Naive thymus-derived CD4-positive, alpha-beta T cell (primary cell): ENCODE measurements at regions of chr13 and their contacts with region 1.

Region 1: GRCh38 chr13:24727731-24728601 is 36.0 kb upstream of the RNF17 start:
- DNase-seq: peak in 8 of 9 donors; percentile 55 to 82 (median 73)
- ATAC-seq: peak; percentile 99
- H3K4me3 ChIP-seq: no peak overlapping the region
- H3K4me3 Mint-ChIP-seq: no peak overlapping the region
- H3K27ac ChIP-seq: no peak overlapping the region
- H3K27ac Mint-ChIP-seq: peak overlapping the region in 1 of 9 donors; percentile 6
- H3K4me1 ChIP-seq: peaks cover 0 to 4% of the 10 kb centered on the region in 2 donors
- H3K4me1 Mint-ChIP-seq: peaks cover 0 to 14% (median 0%) of the 10 kb centered on the region in 7 donors
- H3K27me3 ChIP-seq: no peaks in the 10 kb centered on the region
- H3K27me3 Mint-ChIP-seq: peaks cover 0 to 42% (median 12%) of the 10 kb centered on the region in 5 donors

Region 2: DNA sequence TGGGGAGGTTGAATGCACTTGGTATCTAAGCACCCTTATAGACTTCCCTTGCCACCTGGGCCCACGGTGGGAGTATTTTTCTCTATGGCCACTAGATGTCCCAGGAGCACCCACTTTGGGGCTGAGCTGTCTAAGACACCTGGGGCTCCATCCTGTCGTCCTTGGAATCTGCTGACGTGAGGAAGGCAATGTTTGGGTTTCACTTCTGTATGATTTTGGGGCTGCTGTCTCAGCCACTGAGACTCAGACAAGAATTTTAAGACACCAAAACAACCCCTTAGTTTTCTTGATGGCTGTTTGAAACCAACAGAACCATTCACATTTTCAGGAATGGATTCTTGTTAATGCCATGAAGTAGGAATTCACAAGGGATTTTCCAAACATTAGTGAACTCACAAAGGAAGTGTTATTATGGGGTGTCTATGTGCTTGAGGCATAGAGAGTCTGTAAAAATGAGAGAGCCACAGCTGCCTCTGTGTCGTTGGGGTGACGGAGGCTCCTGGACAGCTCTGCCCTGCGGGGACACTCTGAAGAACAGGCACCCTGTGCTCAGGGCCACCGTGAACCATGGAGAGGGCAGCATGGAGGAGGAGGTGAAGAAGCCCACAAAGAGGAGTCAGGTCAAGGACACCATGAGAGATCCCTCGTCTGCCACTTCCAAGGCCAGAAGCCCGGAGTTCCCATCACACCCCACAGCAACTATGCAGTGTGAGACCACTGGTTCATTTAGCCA is 674.3 kb before region 1 on chr13:
- CTCF ChIA-PET with region 1: no interaction called
- POLR2A ChIA-PET with region 1: no interaction called
- intact Hi-C with region 1: loop called in 1 of 2 experiments (anchors 10 kb)
- DNase-seq: peak; percentile 24 to 70 (median 61)
- ATAC-seq: peak; percentile 91
- H3K4me3 ChIP-seq: no peak overlapping the region
- H3K4me3 Mint-ChIP-seq: no peak overlapping the region
- H3K27ac ChIP-seq: no peak overlapping the region
- H3K27ac Mint-ChIP-seq: peak overlapping the region in 5 of 9 donors; percentile 21 to 68 (median 24)
- H3K4me1 ChIP-seq: no peaks in the 10 kb centered on the region
- H3K4me1 Mint-ChIP-seq: peaks cover 0 to 12% (median 9%) of the 10 kb centered on the region in 7 donors
- H3K27me3 ChIP-seq: no peaks in the 10 kb centered on the region
- H3K27me3 Mint-ChIP-seq: peaks cover 3 to 22% (median 7%) of the 10 kb centered on the region in 5 donors

Region 3: GRCh38 chr13:24605923-24606372 is 122.0 kb before region 1 on chr13:
- CTCF ChIA-PET with region 1: interaction called, 12 read pairs
- POLR2A ChIA-PET with region 1: interaction called, 4 read pairs
- intact Hi-C with region 1: loop called (anchors 1 kb)
- DNase-seq: peak in 5 of 9 donors; percentile 24 to 50 (median 39)
- ATAC-seq: peak; percentile 76
- H3K4me3 ChIP-seq: no peak overlapping the region
- H3K4me3 Mint-ChIP-seq: no peak overlapping the region
- H3K27ac ChIP-seq: no peak overlapping the region
- H3K27ac Mint-ChIP-seq: no peak overlapping the region
- H3K4me1 ChIP-seq: no peaks in the 10 kb centered on the region
- H3K4me1 Mint-ChIP-seq: peaks cover 0 to 10% (median 0%) of the 10 kb centered on the region in 7 donors
- H3K27me3 ChIP-seq: no peaks in the 10 kb centered on the region
- H3K27me3 Mint-ChIP-seq: no peaks in the 10 kb centered on the region

Region 4: DNA sequence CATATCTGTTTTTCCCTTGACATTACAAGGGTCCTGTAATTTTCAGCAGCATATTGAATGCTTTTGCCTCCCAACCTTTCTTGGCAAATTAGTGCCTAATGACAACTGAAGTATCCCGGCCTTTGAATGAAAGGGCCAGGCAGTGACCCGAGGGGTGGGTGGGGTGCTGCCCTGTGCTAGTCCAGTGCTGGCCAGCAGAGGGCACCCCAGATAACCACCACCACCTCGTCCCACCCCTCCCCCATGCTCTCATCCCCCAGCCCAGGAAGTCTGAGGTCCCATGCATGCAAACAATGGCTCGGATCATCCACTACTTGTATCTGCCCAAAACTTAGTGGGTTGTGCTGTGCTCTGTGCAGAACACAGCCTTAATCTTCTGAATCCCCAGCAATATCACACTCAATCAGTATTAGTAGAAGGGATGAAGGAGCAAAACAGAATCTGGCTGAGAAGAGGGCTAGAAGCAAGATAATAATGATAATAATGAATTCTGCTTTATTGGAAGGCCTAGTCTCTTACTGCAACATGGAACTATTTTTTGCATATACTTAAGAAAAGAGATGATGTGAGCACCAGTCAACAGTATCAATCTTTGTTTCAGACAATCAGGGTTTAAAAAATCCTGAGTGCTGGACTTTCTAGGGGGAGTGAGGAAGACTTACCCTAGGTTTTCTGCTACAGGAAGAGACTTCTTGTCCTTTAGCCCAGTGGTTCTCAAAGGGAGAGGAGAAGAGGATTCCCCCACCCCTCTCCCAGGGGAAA is 43.9 kb before region 1 on chr13:
- CTCF ChIA-PET with region 1: interaction called, 4 read pairs
- POLR2A ChIA-PET with region 1: no interaction called
- intact Hi-C with region 1: loop called (anchors 1 kb)
- DNase-seq: peak; percentile 28 to 63 (median 55)
- ATAC-seq: peak; percentile 88
- H3K4me3 ChIP-seq: no peak overlapping the region
- H3K4me3 Mint-ChIP-seq: peak overlapping the region; percentile 5 to 64 (median 39)
- H3K27ac ChIP-seq: no peak overlapping the region
- H3K27ac Mint-ChIP-seq: peak overlapping the region in 7 of 9 donors; percentile 0 to 87 (median 37)
- H3K4me1 ChIP-seq: peaks cover 15 to 30% of the 10 kb centered on the region in 2 donors
- H3K4me1 Mint-ChIP-seq: peaks cover 22 to 43% (median 30%) of the 10 kb centered on the region in 7 donors
- H3K27me3 ChIP-seq: peaks cover 4 to 10% of the 10 kb centered on the region in 2 donors
- H3K27me3 Mint-ChIP-seq: peaks cover 22 to 58% (median 33%) of the 10 kb centered on the region in 5 donors

Region 5: DNA sequence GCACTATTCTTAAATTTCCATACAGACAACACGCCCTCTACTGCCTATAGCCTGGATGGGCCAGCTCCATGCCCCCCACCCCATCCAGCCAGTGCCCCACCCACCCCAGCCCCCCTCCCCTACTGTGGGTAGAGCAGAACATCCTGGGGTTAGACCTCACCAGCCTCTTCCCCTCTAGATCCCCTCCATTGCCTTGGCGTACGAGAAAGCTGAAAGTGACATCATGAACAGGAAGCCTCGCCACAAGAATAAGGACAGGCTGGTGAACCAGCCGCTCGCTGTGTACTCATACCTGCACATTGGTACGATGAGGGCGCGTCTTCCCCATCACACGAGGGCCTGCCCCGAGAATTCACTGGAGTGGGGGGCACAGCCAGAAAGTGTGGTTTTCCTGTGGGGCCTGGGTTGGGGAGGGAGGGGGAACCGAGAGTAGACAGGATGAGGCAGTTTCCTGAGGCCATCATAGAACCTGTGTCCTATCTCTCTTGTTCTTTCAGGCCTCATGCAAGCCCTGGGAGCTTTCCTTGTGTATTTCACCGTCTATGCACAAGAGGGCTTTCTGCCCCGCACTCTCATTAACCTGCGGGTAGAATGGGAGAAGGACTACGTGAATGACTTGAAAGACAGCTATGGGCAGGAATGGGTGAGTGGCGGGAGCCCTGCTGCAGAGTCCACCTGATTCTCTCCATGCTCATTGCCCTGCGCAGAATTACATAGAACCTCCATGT is 18.6 kb before region 1 on chr13:
- CTCF ChIA-PET with region 1: interaction called, 6 read pairs
- POLR2A ChIA-PET with region 1: no interaction called
- intact Hi-C with region 1: loop called in 1 of 2 experiments (anchors 2 kb)
- DNase-seq: peak; percentile 22 to 82 (median 74)
- ATAC-seq: peak; percentile 91
- H3K4me3 ChIP-seq: peak overlapping the region; percentile 17
- H3K4me3 Mint-ChIP-seq: peak overlapping the region; percentile 57 to 76 (median 74)
- H3K27ac ChIP-seq: peak overlapping the region; percentile 15
- H3K27ac Mint-ChIP-seq: peak overlapping the region; percentile 69 to 92 (median 90)
- H3K4me1 ChIP-seq: peaks cover 6 to 10% of the 10 kb centered on the region in 2 donors
- H3K4me1 Mint-ChIP-seq: peaks cover 4 to 36% (median 15%) of the 10 kb centered on the region in 7 donors
- H3K27me3 ChIP-seq: no peaks in the 10 kb centered on the region
- H3K27me3 Mint-ChIP-seq: peaks cover 0 to 11% (median 0%) of the 10 kb centered on the region in 5 donors